ENCODE measurements at regions of chr16 and their contacts with region 1.

Region 1: GRCh38 chr16:71961066-71962039 is 38.8 kb downstream of the PKD1L3 start:
- DNase-seq: peak; percentile 92
- ATAC-seq: peak; percentile 97
- H3K4me3 Mint-ChIP-seq: no peak overlapping the region
- H3K27ac Mint-ChIP-seq: no peak overlapping the region
- H3K4me1 Mint-ChIP-seq: peaks cover 3% of the 10 kb centered on the region
- H3K27me3 Mint-ChIP-seq: no peaks in the 10 kb centered on the region
- CTCF ChIP-seq: peak; percentile 90

Region 2: GRCh38 chr16:71723537-71724319 is 237.6 kb before region 1 on chr16:
- CTCF ChIA-PET with region 1: interaction called, 3 read pairs
- POLR2A ChIA-PET with region 1: no interaction called
- intact Hi-C with region 1: loop called (anchors 10 kb)
- DNase-seq: peak; percentile 75
- ATAC-seq: peak; percentile 89
- H3K4me3 Mint-ChIP-seq: peak overlapping the region; percentile 72
- H3K27ac Mint-ChIP-seq: no peak overlapping the region
- H3K4me1 Mint-ChIP-seq: peaks cover 14% of the 10 kb centered on the region
- H3K27me3 Mint-ChIP-seq: peaks cover 2% of the 10 kb centered on the region
- CTCF ChIP-seq: no peak

Region 3: DNA sequence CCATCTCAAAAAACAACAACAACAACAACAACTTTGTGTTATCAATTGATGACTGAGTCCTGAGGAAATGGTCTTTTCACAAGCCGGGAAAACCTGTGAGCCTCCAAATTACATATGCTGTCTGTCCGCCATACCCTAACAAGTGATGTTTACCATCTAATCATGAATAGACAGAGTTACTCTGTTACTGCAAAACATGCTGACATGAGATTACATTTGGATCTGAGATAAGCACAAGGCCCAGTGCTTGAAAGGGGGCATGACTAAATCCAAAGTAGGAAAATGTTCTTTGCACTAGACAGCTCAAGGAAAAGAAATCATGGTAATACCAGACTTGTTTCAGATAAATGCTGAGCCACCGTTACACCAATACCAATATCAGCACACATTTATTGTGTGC is 124.2 kb before region 1 on chr16:
- CTCF ChIA-PET with region 1: no interaction called
- POLR2A ChIA-PET with region 1: no interaction called
- intact Hi-C with region 1: no loop called
- DNase-seq: no peak
- ATAC-seq: no peak
- H3K4me3 Mint-ChIP-seq: no peak overlapping the region
- H3K27ac Mint-ChIP-seq: no peak overlapping the region
- H3K4me1 Mint-ChIP-seq: peaks cover 7% of the 10 kb centered on the region
- H3K27me3 Mint-ChIP-seq: no peaks in the 10 kb centered on the region
- CTCF ChIP-seq: no peak

Region 4: DNA sequence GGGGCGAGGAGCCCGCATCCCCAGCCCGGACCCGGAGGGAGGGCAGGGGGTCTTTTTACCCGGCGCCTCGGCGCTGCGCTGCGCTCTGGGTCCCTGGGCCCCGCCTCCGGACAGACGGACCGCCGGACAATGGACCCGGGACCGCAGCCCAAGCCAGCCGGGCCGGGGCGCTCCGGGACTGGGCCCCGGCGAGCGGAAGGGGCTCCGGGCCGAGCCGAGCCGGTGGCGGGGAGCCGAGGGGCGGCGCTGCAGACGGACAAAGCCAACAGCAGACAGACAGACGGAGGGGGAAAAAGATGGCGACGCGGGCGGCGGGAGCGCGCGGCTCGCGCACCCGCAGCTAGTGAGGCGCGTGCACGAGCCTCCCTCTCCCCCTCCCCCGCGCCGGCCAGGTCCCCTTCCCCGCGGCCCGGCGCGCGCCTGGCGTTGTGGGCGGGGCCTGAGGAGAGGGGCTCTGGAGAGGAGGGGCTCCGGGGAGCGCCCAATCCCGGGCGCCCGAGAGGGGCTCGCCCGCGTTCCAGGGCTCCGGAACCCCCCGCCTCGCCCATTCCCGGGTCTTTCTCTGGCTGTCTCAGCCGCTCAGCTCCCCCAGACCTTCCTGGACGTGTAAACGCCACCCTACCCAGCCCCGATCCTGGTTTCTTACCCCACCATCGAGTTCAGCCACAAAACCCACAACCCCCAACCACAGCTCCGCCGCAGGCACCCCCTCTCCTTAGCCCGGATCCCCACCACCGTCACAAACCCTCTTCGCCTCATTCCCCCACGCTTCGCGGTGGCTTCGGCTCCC is 77.3 kb before region 1 on chr16 and contains the start of gene ZNF821:
- CTCF ChIA-PET with region 1: interaction called, 19 read pairs
- POLR2A ChIA-PET with region 1: no interaction called
- intact Hi-C with region 1: no loop called
- DNase-seq: peak; percentile 78
- ATAC-seq: peak; percentile 54
- H3K4me3 Mint-ChIP-seq: peak within 1 kb of the TSS; percentile 92
- H3K27ac Mint-ChIP-seq: peak within 1 kb of the TSS; percentile 90
- H3K4me1 Mint-ChIP-seq: peaks cover 47% of the 10 kb centered on the region
- H3K27me3 Mint-ChIP-seq: peaks cover 7% of the 10 kb centered on the region
- CTCF ChIP-seq: peak; percentile 27
- total RNA-seq, gene ZNF821: 5.6 to 6.2 TPM

Region 5: GRCh38 chr16:71933913-71934695 is 27.2 kb before region 1 on chr16:
- CTCF ChIA-PET with region 1: interaction called, 10 read pairs
- POLR2A ChIA-PET with region 1: interaction called, 4 read pairs
- intact Hi-C with region 1: no loop called
- DNase-seq: no peak
- ATAC-seq: no peak
- H3K4me3 Mint-ChIP-seq: no peak overlapping the region
- H3K27ac Mint-ChIP-seq: peak overlapping the region; percentile 48
- H3K4me1 Mint-ChIP-seq: peaks cover 5% of the 10 kb centered on the region
- H3K27me3 Mint-ChIP-seq: no peaks in the 10 kb centered on the region
- CTCF ChIP-seq: no peak